MCF 10A (cell line): ENCODE measurements at regions of chr2 and their contacts with region 1.

Region 1: DNA sequence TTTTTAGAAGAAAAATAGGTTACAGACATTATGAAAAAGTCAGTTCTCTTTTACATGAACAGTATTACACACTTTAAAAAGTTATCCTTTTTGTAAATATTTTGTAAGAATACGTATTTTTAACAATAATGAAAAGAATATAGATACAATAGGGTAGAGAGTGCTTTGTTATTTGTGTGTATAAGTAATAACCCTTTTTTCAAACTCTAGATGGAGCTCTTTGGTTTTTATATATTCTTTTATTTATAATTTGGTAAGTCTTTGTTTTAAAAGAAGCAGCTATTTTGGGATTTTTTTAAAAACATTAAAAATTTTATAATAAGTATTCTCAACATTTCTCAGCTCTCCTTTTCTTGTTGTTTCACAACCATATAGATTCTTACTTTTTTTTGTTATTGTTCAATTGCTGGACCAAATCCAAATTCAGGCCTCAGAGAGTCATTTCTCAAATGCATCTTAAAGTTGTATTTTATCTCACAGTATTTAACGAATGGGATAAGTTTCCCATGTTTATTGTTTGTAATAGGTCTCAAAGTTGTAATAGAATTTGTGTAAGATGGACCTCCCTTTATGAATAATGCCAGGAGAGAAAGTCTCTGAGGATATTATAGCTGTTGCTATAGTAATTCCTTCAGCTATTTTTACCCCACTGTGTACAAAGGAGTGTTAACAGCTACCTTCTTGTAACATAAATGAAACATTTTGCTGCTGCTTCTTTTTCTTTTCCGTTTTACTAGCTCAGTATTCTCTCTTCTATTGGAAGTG is 46.4 kb downstream of the ACYP2 start:
- DNase-seq: no peak
- H3K4me3 Mint-ChIP-seq: no peak overlapping the region
- H3K27ac Mint-ChIP-seq: no peak overlapping the region
- H3K4me1 Mint-ChIP-seq: no peaks in the 10 kb centered on the region
- H3K27me3 Mint-ChIP-seq: no peaks in the 10 kb centered on the region
- CTCF ChIP-seq: no peak

Region 2: DNA sequence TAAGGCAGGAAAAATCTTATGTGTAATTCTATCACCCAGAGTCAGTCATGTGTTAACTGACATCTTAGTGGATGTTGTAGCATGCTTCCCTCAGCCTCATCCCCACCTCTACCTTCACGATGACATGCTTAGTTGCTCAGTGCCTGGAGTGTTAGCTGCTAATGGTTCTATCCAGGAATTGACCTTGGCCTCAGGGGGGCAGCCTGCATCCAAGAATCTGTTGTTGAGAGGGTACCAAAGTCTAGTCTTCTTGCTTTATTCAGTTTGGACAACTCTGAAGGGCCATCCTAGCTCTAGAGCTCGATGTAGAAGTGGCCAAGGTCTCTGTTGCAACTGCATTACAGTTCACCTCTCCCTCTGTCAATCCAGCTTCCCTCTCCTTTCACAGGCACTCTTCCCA is 14.7 kb after region 1 on chr2:
- CTCF ChIA-PET with region 1: interaction called, 10 read pairs
- POLR2A ChIA-PET with region 1: no interaction called
- intact Hi-C with region 1: no loop called
- DNase-seq: peak; percentile 40
- H3K4me3 Mint-ChIP-seq: no peak overlapping the region
- H3K27ac Mint-ChIP-seq: no peak overlapping the region
- H3K4me1 Mint-ChIP-seq: no peaks in the 10 kb centered on the region
- H3K27me3 Mint-ChIP-seq: no peaks in the 10 kb centered on the region
- CTCF ChIP-seq: peak; percentile 10

Region 3: GRCh38 chr2:54438271-54438670 is 276.4 kb after region 1 on chr2:
- CTCF ChIA-PET with region 1: no interaction called
- POLR2A ChIA-PET with region 1: no interaction called
- intact Hi-C with region 1: no loop called
- DNase-seq: no peak
- H3K4me3 Mint-ChIP-seq: no peak overlapping the region
- H3K27ac Mint-ChIP-seq: no peak overlapping the region
- H3K4me1 Mint-ChIP-seq: no peaks in the 10 kb centered on the region
- H3K27me3 Mint-ChIP-seq: no peaks in the 10 kb centered on the region
- CTCF ChIP-seq: no peak